Dorsolateral prefrontal cortex (tissue), 120 donors: ENCODE measurements at regions of chr5 and their contacts with region 1.

Region 1: DNA sequence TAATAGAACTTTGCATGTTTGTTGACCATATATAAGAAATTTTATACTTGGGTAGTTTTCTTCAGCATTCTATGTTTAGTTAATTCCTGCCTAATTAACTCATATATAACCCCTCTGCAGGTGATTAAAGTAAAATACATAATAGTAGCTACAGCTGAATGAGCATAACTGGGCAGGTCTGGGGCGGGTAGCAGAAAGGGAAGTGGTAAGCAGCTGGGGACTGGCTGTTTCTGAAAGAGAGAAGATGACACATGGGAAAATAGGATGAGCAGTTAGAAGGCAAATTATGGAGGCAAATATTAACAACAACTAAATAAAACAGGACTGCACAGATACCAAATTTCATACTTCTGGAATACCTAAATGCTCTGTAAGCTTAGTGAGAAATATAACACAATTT is 128.1 kb downstream of the CPLANE1 start:
- DNase-seq: no peak
- H3K4me3 ChIP-seq: no peak overlapping the region
- H3K27ac ChIP-seq: no peak overlapping the region
- H3K27me3 ChIP-seq: no peaks in the 10 kb centered on the region
- CTCF ChIP-seq: no peak

Region 2: DNA sequence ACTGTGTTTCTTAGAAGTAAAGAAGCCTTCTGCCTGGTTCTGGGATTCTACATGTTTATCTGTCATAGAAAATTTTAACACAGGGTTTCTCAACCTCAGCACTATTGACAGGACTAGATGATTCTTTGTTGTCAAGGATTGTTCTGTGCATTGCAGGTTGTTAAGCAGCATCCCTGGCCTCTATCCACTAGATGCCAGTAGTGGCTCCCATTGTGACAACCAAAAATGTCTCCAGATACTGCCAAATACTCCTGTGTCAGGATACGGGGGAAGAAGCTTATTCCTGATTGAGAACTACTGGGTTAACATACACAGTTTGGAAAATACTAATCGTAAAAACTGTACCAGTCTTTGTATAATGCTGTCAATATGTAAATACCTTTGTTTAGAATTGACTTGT is 77.3 kb before region 1 on chr5:
- intact Hi-C with region 1: loop called in 1 of 2 experiments (anchors 5 kb)
- DNase-seq: peak in 2 of 10 donors; percentile 42 to 45
- H3K4me3 ChIP-seq: no peak overlapping the region
- H3K27ac ChIP-seq: peak overlapping the region in 43 of 59 donors; percentile 2 to 96 (median 59)
- H3K27me3 ChIP-seq: no peaks in the 10 kb centered on the region
- CTCF ChIP-seq: peak in 51 of 56 donors; percentile 11 to 71 (median 45)

Region 3: GRCh38 chr5:37565067-37565670 is 444.1 kb after region 1 on chr5:
- intact Hi-C with region 1: no loop called
- DNase-seq: no peak
- H3K4me3 ChIP-seq: no peak overlapping the region
- H3K27ac ChIP-seq: no peak overlapping the region
- H3K27me3 ChIP-seq: no peaks in the 10 kb centered on the region
- CTCF ChIP-seq: no peak